Activated CD4-positive, alpha-beta T cell treated with anti-CD3 and anti-CD28 coated beads for 36 hours (primary cell): ENCODE measurements at regions of chr2 and their contacts with region 1.

Region 1: GRCh38 chr2:174004905-174005605 is 39.9 kb upstream of the SP3 start:
- DNase-seq: peak; percentile 49
- ATAC-seq: peak; percentile 98
- H3K4me3 Mint-ChIP-seq: no peak overlapping the region
- H3K27ac Mint-ChIP-seq: no peak overlapping the region
- H3K4me1 Mint-ChIP-seq: peaks cover 8% of the 10 kb centered on the region
- H3K27me3 Mint-ChIP-seq: peaks cover 4% of the 10 kb centered on the region

Region 2: GRCh38 chr2:173978447-173978846 is 26.6 kb before region 1 on chr2:
- CTCF ChIA-PET with region 1: no interaction called
- POLR2A ChIA-PET with region 1: no interaction called
- intact Hi-C with region 1: loop called (anchors 1 kb)
- DNase-seq: peak; percentile 59
- ATAC-seq: peak; percentile 99
- H3K4me3 Mint-ChIP-seq: no peak overlapping the region
- H3K27ac Mint-ChIP-seq: peak overlapping the region; percentile 42
- H3K4me1 Mint-ChIP-seq: peaks cover 30% of the 10 kb centered on the region
- H3K27me3 Mint-ChIP-seq: peaks cover 4% of the 10 kb centered on the region